Left lung (tissue), 14 donors: ENCODE measurements at regions of chr5 and their contacts with region 1.

Region 1: DNA sequence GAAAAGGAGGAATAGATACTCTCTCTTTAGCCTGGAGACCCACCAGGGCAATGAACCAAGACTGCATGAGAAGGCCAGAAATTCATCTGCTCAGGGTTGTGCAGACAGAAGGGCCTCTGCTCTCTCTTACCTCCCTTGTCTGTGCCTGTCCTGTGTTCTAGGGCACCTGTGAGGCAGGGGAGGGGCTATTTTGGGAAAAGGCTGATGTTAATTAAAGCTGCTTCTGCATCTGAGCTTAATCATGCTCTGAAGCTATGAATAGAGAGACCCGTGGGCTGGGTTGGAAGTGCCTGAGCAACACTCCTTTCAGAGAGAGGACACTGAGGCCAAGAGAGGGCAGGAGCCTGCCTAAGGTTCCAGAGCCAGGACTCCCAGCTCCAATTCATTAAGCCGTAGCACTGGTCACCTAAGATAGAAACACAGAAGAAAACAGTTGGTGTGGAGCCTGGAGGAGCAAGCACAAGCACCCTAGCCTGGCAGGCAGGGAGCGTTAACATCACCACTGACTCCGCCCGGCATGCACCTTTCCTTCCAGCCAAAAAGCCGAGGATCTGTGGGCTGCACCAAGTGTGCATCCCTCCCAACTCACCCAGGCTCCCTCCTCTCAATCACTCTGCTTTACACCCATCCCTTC is 31.4 kb upstream of the STING1 start:
- DNase-seq: no peak
- ATAC-seq: no peak
- H3K4me3 ChIP-seq: no peak overlapping the region
- H3K27ac ChIP-seq: no peak overlapping the region
- H3K4me1 ChIP-seq: peaks cover 4 to 24% of the 10 kb centered on the region in 2 donors
- H3K27me3 ChIP-seq: no peaks in the 10 kb centered on the region
- CTCF ChIP-seq: peak in 1 of 2 donors; percentile 20

Region 2: DNA sequence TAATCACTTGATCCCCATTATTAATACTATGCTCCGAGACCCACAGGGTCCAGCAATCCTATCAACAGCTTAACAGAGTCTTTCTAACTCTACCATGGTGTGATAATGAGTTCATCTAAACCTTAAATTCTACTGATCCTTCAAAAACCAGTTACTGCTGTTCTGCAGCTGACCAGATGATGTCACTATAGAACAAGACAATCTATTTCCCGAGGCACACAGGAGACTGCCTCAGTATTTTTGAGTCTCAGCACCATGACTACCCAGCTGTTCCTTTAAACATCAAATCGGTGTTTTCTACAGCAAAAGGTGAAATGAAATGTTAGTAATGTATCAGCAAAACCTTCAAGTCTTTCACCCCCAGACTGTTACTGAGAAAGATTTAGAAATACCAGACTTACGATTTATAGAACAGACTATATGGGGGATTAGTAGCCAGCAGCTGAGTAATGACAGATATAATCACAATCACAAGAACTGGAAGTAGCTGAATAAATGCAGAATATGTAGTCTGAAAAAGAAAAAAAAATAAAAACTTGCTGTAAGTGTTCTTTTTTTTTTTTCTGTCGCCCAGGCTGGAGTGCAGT is 91.6 kb before region 1 on chr5:
- intact Hi-C with region 1: loop called in 1 of 2 experiments (anchors 5 kb)
- DNase-seq: peak in 2 of 4 donors; percentile 49 to 75
- ATAC-seq: peak; percentile 92
- H3K4me3 ChIP-seq: no peak overlapping the region
- H3K27ac ChIP-seq: no peak overlapping the region
- H3K4me1 ChIP-seq: peaks cover 0 to 4% of the 10 kb centered on the region in 2 donors
- H3K27me3 ChIP-seq: no peaks in the 10 kb centered on the region
- CTCF ChIP-seq: peak; percentile 69 to 79

Region 3: GRCh38 chr5:139443831-139444453 is 70.0 kb before region 1 on chr5:
- intact Hi-C with region 1: no loop called
- DNase-seq: no peak
- ATAC-seq: no peak
- H3K4me3 ChIP-seq: no peak overlapping the region
- H3K27ac ChIP-seq: no peak overlapping the region
- H3K4me1 ChIP-seq: peaks cover 0 to 16% of the 10 kb centered on the region in 2 donors
- H3K27me3 ChIP-seq: no peaks in the 10 kb centered on the region
- CTCF ChIP-seq: no peak